Activated CD4-positive, alpha-beta T cell treated with anti-CD3 and anti-CD28 coated beads for 36 hours (primary cell): ENCODE measurements at regions of chr3 and their contacts with region 1.

Region 1: GRCh38 chr3:105518806-105519418 is 152.2 kb downstream of the ALCAM start:
- DNase-seq: peak; percentile 21
- ATAC-seq: peak; percentile 57
- H3K4me3 Mint-ChIP-seq: no peak overlapping the region
- H3K27ac Mint-ChIP-seq: no peak overlapping the region
- H3K4me1 Mint-ChIP-seq: peaks cover 3% of the 10 kb centered on the region
- H3K27me3 Mint-ChIP-seq: peaks cover 2% of the 10 kb centered on the region

Region 2: GRCh38 chr3:104564045-104564643 is 954.8 kb before region 1 on chr3:
- CTCF ChIA-PET with region 1: no interaction called
- POLR2A ChIA-PET with region 1: no interaction called
- intact Hi-C with region 1: loop called (anchors 1 to 5 kb)
- DNase-seq: peak; percentile 77
- ATAC-seq: no peak
- H3K4me3 Mint-ChIP-seq: no peak overlapping the region
- H3K27ac Mint-ChIP-seq: no peak overlapping the region
- H3K4me1 Mint-ChIP-seq: peaks cover 2% of the 10 kb centered on the region
- H3K27me3 Mint-ChIP-seq: no peaks in the 10 kb centered on the region

Region 3: DNA sequence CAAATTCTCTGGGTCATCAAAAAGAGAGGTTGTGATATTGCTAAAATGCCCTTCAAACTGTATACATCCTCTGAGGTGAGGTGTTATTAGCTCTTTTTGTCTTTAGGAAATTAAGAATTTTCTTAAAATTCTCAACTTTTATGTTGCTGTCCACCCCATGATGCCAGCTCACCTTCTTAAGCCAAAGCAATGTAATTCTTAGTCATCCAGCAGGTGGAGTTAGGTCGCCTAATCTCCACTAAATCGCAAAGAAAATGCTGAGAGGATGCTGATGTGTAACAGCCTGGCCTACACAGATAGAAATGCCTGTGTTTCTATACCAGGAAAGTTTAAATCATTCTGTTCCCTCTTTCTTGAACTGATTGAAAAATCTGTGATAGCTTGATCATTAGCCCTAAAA is 922.4 kb before region 1 on chr3:
- CTCF ChIA-PET with region 1: no interaction called
- POLR2A ChIA-PET with region 1: no interaction called
- intact Hi-C with region 1: loop called in 1 of 2 experiments (anchors 2 kb)
- DNase-seq: no peak
- ATAC-seq: peak; percentile 42
- H3K4me3 Mint-ChIP-seq: no peak overlapping the region
- H3K27ac Mint-ChIP-seq: no peak overlapping the region
- H3K4me1 Mint-ChIP-seq: peaks cover 3% of the 10 kb centered on the region
- H3K27me3 Mint-ChIP-seq: no peaks in the 10 kb centered on the region

Region 4: GRCh38 chr3:105458518-105459215 is 60.2 kb before region 1 on chr3:
- CTCF ChIA-PET with region 1: no interaction called
- POLR2A ChIA-PET with region 1: no interaction called
- intact Hi-C with region 1: no loop called
- DNase-seq: no peak
- ATAC-seq: no peak
- H3K4me3 Mint-ChIP-seq: no peak overlapping the region
- H3K27ac Mint-ChIP-seq: no peak overlapping the region
- H3K4me1 Mint-ChIP-seq: no peaks in the 10 kb centered on the region
- H3K27me3 Mint-ChIP-seq: no peaks in the 10 kb centered on the region

Region 5: DNA sequence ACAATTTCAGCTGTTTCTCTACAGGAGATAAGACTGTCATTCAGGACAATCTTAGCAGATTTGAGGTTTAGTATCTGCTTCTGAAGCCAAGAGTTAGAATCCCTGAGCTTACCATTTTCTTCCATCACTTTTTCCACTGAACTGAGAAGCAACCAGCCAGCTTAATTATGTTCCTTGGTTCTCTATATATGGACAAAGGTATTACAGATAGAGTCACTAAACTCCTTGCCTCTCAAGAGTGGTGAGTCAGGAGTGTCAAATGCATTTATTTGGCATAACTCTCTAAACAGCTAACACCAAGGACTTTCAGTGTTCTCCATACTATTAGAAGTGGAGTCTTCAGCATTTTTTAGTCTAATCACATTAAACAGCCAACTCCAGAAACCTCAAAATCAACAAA is 87.1 kb after region 1 on chr3:
- CTCF ChIA-PET with region 1: no interaction called
- POLR2A ChIA-PET with region 1: no interaction called
- intact Hi-C with region 1: no loop called
- DNase-seq: no peak
- ATAC-seq: no peak
- H3K4me3 Mint-ChIP-seq: no peak overlapping the region
- H3K27ac Mint-ChIP-seq: no peak overlapping the region
- H3K4me1 Mint-ChIP-seq: no peaks in the 10 kb centered on the region
- H3K27me3 Mint-ChIP-seq: peaks cover 3% of the 10 kb centered on the region

Region 6: GRCh38 chr3:105662306-105662705 is 143.4 kb after region 1 on chr3:
- CTCF ChIA-PET with region 1: no interaction called
- POLR2A ChIA-PET with region 1: no interaction called
- intact Hi-C with region 1: no loop called
- DNase-seq: no peak
- ATAC-seq: no peak
- H3K4me3 Mint-ChIP-seq: no peak overlapping the region
- H3K27ac Mint-ChIP-seq: no peak overlapping the region
- H3K4me1 Mint-ChIP-seq: no peaks in the 10 kb centered on the region
- H3K27me3 Mint-ChIP-seq: no peaks in the 10 kb centered on the region

Region 7: DNA sequence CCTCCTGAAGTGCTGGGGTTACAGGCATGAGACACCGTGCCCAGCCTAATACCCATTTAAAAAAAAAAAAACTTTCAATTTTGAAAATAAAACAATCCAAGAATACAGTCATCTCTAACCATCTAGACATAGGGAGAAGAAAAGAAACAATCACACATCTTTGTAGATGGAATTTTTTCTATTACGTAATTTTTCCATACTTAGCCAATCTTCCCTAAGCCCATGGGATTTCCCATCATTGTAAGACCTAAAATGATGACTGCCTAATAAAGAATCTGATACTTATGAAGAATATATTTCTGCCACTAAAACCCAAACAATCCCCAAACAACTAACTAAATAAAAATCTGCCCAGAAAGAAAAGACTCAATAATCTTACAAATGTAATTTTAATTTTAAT is 261.2 kb after region 1 on chr3:
- CTCF ChIA-PET with region 1: no interaction called
- POLR2A ChIA-PET with region 1: no interaction called
- intact Hi-C with region 1: no loop called
- DNase-seq: no peak
- ATAC-seq: no peak
- H3K4me3 Mint-ChIP-seq: no peak overlapping the region
- H3K27ac Mint-ChIP-seq: no peak overlapping the region
- H3K4me1 Mint-ChIP-seq: peaks cover 66% of the 10 kb centered on the region
- H3K27me3 Mint-ChIP-seq: no peaks in the 10 kb centered on the region

Region 8: GRCh38 chr3:107064445-107065060 is 1545.6 kb after region 1 on chr3:
- CTCF ChIA-PET with region 1: no interaction called
- POLR2A ChIA-PET with region 1: no interaction called
- intact Hi-C with region 1: loop called in 1 of 2 experiments (anchors 2 kb)
- DNase-seq: peak; percentile 80
- ATAC-seq: peak; percentile 85
- H3K4me3 Mint-ChIP-seq: no peak overlapping the region
- H3K27ac Mint-ChIP-seq: no peak overlapping the region
- H3K4me1 Mint-ChIP-seq: peaks cover 19% of the 10 kb centered on the region
- H3K27me3 Mint-ChIP-seq: peaks cover 8% of the 10 kb centered on the region